AG04450 (cell line): ENCODE measurements at regions of chr2 and their contacts with region 1.

Region 1: GRCh38 chr2:174771631-174772471 is 7.6 kb upstream of the CHRNA1 start:
- DNase-seq: no peak
- H3K4me3 ChIP-seq: no peak overlapping the region
- H3K27ac ChIP-seq: peak overlapping the region; percentile 90
- H3K27me3 ChIP-seq: no peaks in the 10 kb centered on the region
- CTCF ChIP-seq: peak; percentile 95

Region 2: DNA sequence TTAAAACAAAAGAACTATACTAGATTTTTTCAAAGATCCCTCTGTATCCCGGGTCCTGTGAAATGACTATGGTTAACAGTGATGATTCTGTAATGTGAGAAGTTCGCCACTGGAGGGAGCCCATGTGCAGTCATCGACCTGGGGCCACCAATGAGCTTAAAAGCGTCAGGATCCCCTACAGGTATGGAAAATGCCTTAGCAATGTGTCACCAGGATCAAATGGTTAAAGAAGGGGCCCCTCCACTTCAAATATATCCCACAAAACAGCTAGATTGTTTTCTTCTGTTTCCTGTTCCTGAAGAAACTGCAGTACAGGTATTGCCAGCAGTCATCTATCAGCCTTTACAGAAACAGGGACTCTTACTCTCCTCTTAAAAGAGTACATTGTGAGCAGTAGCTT is 22.9 kb before region 1 on chr2:
- CTCF ChIA-PET with region 1: interaction called, 30 read pairs
- POLR2A ChIA-PET with region 1: no interaction called
- DNase-seq: peak; percentile 16
- H3K4me3 ChIP-seq: no peak overlapping the region
- H3K27ac ChIP-seq: no peak overlapping the region
- H3K27me3 ChIP-seq: peaks cover 2% of the 10 kb centered on the region
- CTCF ChIP-seq: peak; percentile 83

Region 3: DNA sequence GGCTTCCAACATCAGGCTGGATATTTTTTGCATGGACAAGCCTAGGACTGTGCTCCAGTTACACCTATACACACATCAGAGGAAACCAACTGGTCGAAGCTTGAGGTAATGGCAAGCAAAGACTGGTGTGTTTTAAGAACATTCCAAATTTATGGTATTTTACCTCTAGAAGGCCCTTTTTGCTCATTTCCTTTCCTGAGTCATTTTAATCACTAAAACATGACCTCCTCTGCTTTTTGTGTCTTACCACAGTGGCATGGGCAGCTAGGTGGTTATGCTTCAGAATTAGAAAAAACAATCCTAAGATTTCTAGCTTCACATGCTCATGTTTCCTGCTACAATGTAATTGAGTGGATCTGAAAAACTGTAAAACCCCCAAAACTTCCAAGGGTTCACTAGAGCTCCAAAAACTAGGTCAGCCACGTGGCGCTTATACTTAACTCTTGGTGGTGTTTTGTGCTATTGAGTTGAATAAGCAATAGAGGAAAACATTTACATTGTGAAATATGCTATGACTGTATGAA is 23.1 kb after region 1 on chr2:
- CTCF ChIA-PET with region 1: interaction called, 23 read pairs
- POLR2A ChIA-PET with region 1: no interaction called
- DNase-seq: no peak
- H3K4me3 ChIP-seq: no peak overlapping the region
- H3K27ac ChIP-seq: peak overlapping the region; percentile 55
- H3K27me3 ChIP-seq: no peaks in the 10 kb centered on the region
- CTCF ChIP-seq: no peak

Region 4: DNA sequence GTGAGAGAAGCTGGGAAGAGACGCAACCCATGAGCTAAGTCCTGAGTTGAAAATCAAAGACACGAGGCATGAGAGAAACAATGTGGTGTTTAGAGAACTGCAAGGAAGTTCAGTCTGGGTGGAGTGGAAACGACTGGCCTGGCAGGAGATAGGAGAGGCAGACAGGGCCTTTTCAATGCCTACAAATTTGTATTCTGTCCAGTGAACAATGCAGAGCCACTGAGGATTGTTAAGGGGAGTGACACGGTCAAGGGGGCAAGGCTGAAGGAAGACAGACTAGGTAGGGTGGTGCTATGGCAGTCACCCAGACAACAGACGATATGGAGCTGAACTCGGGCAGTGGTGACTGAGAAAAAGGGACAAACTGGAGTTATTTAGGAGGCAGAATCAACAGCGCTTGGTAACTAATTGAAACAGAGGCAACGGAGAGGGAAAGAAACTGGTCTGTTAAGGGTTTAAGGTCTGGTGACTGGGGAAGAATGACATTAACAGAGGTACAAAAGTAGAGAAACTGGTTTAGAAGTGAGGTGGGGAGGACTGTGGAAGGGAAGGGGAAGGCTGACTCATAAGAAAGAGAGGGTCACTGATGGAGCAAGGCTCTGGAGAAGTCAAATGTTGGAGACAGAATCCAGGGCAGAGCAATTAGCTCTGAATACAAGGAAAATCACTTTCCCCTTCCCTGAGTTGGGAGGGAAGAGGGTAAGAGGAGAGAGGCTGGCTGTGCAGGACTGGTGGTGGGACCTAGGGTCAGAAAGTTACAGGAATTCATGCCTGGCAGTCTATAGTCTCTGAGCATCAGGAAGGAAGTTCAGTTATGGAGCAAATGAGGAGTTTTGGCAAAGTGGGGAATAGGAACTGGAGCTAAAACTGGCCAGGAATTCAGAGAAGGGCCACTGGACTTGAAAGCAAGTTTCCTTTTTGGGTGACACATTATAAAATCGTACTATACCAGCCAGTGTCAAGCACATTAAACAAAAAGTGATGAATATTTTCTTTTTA is 55.8 kb after region 1 on chr2:
- CTCF ChIA-PET with region 1: interaction called, 14 read pairs
- POLR2A ChIA-PET with region 1: no interaction called
- DNase-seq: no peak
- H3K4me3 ChIP-seq: no peak overlapping the region
- H3K27ac ChIP-seq: peak overlapping the region; percentile 53
- H3K27me3 ChIP-seq: no peaks in the 10 kb centered on the region
- CTCF ChIP-seq: no peak

Region 5: GRCh38 chr2:174846941-174847938 is 75.4 kb after region 1 on chr2:
- CTCF ChIA-PET with region 1: interaction called, 13 read pairs
- POLR2A ChIA-PET with region 1: no interaction called
- DNase-seq: peak; percentile 78
- H3K4me3 ChIP-seq: peak overlapping the region; percentile 70
- H3K27ac ChIP-seq: peak overlapping the region; percentile 49
- H3K27me3 ChIP-seq: no peaks in the 10 kb centered on the region
- CTCF ChIP-seq: no peak

Region 6: DNA sequence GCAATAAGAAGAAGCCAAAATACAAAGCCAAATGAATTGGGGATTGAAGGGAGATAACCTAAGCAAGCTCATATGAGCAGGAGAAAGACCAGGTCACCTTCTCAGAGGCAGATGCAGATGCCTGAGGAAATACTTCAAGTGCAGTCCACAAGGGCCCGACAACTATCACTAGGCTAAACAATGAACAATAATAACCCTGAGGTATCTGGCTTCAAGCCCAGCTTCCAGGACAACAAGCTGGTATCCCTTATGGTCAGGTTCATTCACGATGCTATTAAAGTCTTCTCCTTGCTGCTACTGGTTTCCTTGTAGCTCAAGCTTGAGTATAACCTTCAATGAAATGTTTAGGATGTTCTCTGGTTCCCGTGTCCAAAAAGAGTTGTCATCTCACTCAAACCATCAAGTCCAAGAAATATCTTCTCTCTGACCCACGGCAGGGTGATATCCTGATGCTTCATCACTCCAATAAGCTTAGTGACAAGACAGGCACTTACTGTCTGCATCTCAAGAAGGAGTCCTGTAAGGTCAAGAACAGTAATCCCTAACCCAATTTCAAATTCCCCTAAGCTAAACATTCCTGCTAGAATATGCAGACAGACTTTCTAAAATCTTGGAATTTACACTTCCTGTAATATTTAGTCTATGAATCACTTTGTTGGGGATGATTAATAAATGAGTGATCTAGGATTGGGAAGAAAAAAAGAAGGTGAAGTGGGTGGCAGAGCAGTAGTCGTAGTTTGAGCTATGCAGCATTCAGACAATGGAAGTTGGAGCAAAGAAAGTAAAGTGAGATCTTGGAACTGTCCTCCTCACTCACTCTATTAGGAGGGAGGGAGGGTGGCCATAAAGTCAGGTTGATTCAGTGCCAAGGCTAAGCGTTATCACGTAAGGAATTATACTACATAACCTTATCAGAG is 200.3 kb after region 1 on chr2:
- CTCF ChIA-PET with region 1: interaction called, 11 read pairs
- POLR2A ChIA-PET with region 1: no interaction called
- DNase-seq: peak; percentile 10
- H3K4me3 ChIP-seq: no peak overlapping the region
- H3K27ac ChIP-seq: no peak overlapping the region
- H3K27me3 ChIP-seq: no peaks in the 10 kb centered on the region
- CTCF ChIP-seq: no peak